ENCODE measurements at regions of chr1 and their contacts with region 1.

Region 1: DNA sequence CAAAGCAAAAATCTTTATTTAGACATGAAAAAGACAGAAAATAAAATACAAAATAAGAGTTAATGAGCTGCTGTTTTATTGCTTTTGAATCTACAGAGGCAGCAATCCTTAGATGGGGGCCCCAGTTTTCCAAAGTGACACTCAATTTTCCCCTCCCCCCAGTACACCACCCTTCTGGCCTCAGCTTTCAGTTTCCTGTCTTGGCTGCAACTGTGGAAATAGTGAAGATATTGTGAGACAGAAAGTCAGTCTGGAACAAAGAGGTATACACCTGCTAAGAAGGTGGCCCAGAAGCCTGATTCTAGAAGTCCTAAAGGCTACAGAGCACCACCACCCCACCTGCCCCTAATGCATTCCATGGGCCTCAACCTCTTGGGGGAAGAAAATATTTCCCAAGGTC is 1.1 kb upstream of the MTMR11 start:
- DNase-seq: no peak
- ATAC-seq: no peak
- H3K4me3 ChIP-seq: no peak overlapping the region
- H3K27ac ChIP-seq: peak overlapping the region; percentile 83 to 95 (median 90)
- H3K4me1 ChIP-seq: peaks cover 32 to 47% of the 10 kb centered on the region in 2 donors
- H3K27me3 ChIP-seq: no peaks in the 10 kb centered on the region
- CTCF ChIP-seq: no peak
- POLR2A ChIP-seq: no peak

Region 2: DNA sequence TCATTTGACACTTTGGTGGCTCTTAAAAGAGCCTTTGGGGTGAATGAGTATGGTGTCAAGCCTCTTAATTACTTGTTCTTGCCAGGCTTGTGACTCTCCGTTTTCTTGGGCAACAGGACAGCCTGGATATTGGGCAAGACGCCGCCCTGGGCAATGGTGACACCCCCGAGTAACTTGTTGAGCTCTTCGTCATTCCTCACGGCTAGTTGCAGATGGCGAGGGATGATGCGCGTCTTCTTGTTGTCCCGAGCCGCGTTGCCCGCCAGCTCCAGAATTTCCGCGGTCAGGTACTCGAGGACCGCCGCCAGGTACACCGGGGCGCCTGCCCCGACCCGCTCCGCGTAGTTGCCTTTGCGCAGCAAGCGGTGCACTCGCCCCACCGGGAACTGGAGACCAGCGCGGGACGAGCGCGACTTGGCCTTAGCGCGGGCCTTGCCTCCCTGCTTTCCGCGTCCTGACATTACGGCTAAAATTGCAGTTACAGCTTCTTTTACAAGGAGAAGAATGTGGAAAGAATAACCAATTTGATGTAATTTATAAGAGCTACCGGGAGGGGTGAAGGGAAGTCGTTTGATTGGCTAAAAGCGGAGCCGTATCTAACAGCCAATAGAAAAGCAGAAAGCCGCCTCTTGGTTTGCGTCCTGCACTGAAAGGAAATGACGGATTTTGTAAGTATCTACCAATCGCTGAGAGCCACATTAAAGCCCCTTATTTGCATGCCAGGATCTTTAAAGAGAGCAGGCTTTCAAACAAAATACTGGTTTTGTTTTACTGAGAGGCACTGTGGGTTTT is 50.1 kb before region 1 on chr1:
- in situ Hi-C with region 1: no loop called
- intact Hi-C with region 1: loop called (anchors 2 kb)
- DNase-seq: peak; percentile 92
- ATAC-seq: peak; percentile 80 to 84
- H3K4me3 ChIP-seq: peak overlapping the region; percentile 64 to 87 (median 81)
- H3K27ac ChIP-seq: peak overlapping the region; percentile 95 to 99 (median 98)
- H3K4me1 ChIP-seq: peaks cover 22% of the 10 kb centered on the region in 2 donors
- H3K27me3 ChIP-seq: no peaks in the 10 kb centered on the region
- CTCF ChIP-seq: peak in 1 of 5 experiments; percentile 24
- POLR2A ChIP-seq: peak; percentile 70 to 88